ENCODE measurements at regions of chr12 and their contacts with region 1.

Region 1: GRCh38 chr12:96906849-96907670 is at the start of gene NEDD1:
- DNase-seq: peak; percentile 82
- H3K4me3 Mint-ChIP-seq: peak within 1 kb of the TSS; percentile 97
- H3K27ac Mint-ChIP-seq: peak within 1 kb of the TSS; percentile 95
- H3K4me1 Mint-ChIP-seq: peaks cover 41% of the 10 kb centered on the region
- H3K27me3 Mint-ChIP-seq: no peaks in the 10 kb centered on the region
- total RNA-seq, gene NEDD1: 61.8 to 63.8 TPM

Region 2: DNA sequence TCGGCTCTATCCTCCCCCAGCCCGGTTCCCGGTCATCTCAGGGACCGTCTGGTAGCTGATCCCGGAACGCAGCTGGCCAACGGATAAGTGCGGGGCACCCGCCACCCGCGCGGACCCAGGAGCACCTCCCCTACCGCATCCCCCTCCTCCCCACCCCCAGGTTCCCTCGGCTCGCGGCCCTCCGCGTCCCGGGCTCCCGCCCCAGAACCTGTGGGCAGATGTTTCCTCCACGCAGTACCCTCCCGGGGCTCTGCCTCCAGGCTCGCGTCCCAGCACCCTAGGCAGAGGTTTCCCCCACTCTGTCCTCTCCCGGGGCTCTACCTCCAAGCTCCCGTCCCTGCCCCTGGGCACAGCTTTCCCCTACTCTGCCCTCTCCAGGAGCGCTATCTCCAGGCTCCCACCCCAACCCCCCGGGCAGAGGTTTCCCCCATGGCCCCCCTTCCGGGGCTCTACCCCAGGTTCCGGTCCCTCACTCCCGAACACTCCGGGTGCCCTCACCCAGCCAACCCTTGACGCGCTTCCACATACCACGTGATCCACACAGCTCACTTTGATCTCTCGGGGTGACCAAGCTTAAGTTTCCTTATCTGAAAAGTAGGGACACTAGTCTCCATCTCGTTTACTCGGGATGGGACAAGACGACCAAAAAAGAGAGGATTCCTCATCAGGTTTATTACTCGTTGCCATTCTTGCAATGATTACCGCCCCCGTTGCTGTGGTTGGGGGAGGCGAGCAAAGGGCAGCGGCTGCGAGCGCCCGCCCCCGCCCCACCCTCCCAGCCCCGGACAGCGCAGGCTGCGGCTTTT is 964.3 kb before region 1 on chr12 and contains the start of gene CCDC38:
- CTCF ChIA-PET with region 1: no interaction called
- intact Hi-C with region 1: loop called (anchors 5 kb)
- DNase-seq: peak; percentile 91
- H3K4me3 Mint-ChIP-seq: peak within 1 kb of the TSS; percentile 86
- H3K27ac Mint-ChIP-seq: peak within 1 kb of the TSS; percentile 80
- H3K4me1 Mint-ChIP-seq: peaks cover 4% of the 10 kb centered on the region
- H3K27me3 Mint-ChIP-seq: no peaks in the 10 kb centered on the region
- total RNA-seq, gene CCDC38: 0.49 TPM in 1 of 2 experiments, not detected in the other

Region 3: GRCh38 chr12:96427269-96427729 is 479.8 kb before region 1 on chr12:
- CTCF ChIA-PET with region 1: no interaction called
- intact Hi-C with region 1: loop called (anchors 10 kb)
- DNase-seq: peak; percentile 81
- H3K4me3 Mint-ChIP-seq: no peak overlapping the region
- H3K27ac Mint-ChIP-seq: peak overlapping the region; percentile 74
- H3K4me1 Mint-ChIP-seq: peaks cover 42% of the 10 kb centered on the region
- H3K27me3 Mint-ChIP-seq: no peaks in the 10 kb centered on the region

Region 4: GRCh38 chr12:96578526-96579125 is 328.4 kb before region 1 on chr12:
- CTCF ChIA-PET with region 1: no interaction called
- intact Hi-C with region 1: loop called (anchors 2 kb)
- DNase-seq: no peak
- H3K4me3 Mint-ChIP-seq: no peak overlapping the region
- H3K27ac Mint-ChIP-seq: no peak overlapping the region
- H3K4me1 Mint-ChIP-seq: peaks cover 9% of the 10 kb centered on the region
- H3K27me3 Mint-ChIP-seq: peaks cover 5% of the 10 kb centered on the region

Region 5: DNA sequence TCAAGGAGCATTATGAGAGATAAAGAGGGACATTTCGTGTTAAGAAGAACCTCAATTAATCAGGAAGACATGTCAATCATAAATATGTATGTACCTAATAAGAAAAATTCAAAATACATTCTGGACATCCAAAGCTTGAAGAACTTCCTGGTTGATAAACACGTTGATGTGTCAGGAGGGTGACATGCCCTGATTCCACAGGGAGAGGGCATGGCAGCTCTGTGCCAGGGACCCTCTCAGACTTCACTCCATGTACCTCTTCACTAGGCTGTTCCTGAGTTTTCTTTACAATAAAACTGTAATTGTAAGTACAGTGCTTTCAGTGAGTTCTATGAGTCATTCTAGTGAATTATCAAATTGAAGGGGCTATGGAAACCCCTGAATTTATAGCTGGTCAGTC is 254.2 kb before region 1 on chr12:
- CTCF ChIA-PET with region 1: no interaction called
- intact Hi-C with region 1: no loop called
- DNase-seq: no peak
- H3K4me3 Mint-ChIP-seq: no peak overlapping the region
- H3K27ac Mint-ChIP-seq: no peak overlapping the region
- H3K4me1 Mint-ChIP-seq: no peaks in the 10 kb centered on the region
- H3K27me3 Mint-ChIP-seq: peaks cover 3% of the 10 kb centered on the region

Region 6: DNA sequence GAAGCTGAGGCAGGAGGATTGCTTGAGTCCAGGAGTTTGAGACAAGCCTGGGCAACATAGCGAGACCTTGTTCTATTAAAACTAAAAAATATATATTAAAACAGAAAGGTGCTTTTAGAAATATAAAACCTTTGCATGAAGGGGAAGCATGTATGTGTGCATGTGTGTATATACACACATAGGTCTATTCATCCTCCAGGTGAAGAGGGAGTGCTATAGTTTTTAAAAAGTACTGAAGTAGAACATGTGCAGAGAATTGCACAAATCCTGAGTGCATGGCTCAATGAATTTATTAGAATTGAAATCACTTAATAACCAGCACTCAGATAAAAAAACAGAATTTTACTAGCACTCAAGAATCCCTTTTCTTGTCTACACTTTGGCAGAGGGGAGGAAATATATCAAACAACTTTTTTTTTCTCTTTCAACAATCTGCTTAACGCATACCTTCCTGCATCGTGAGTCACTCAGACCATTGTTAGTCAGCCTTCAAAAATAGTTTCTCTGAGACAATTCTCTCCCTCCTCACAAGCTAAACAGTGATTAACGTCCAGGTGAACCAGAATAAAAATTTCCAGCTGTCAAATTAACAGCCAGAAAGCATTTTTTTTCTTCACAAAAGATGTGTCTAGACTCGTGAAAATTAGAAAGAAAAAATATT is 17.7 kb before region 1 on chr12:
- CTCF ChIA-PET with region 1: no interaction called
- intact Hi-C with region 1: loop called (anchors 1 kb)
- DNase-seq: no peak
- H3K4me3 Mint-ChIP-seq: no peak overlapping the region
- H3K27ac Mint-ChIP-seq: peak overlapping the region; percentile 25
- H3K4me1 Mint-ChIP-seq: peaks cover 8% of the 10 kb centered on the region
- H3K27me3 Mint-ChIP-seq: peaks cover 5% of the 10 kb centered on the region

Region 7: DNA sequence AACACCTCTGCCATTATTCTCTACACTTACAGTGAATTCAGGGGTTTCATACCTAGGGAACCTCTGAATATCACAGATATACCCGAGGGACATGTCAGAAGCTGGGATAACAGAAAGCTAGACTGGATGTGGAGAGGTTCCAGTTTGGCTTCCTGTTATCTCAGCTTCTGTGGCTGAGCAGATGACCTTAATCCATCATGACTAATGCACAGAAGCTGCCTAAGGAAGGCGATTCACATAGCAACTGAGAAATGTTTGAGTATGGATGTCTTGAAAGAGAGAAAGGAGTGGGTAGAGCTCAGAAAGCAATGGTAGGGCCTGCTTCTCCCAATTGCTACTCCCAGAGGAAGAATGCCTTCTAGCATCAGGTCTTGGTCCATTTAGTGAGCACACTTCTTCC is 743.2 kb after region 1 on chr12:
- CTCF ChIA-PET with region 1: no interaction called
- intact Hi-C with region 1: no loop called
- DNase-seq: no peak
- H3K4me3 Mint-ChIP-seq: no peak overlapping the region
- H3K27ac Mint-ChIP-seq: no peak overlapping the region
- H3K4me1 Mint-ChIP-seq: no peaks in the 10 kb centered on the region
- H3K27me3 Mint-ChIP-seq: no peaks in the 10 kb centered on the region

Region 8: GRCh38 chr12:98503592-98504367 is 1596.7 kb after region 1 on chr12:
- CTCF ChIA-PET with region 1: no interaction called
- intact Hi-C with region 1: loop called (anchors 5 kb)
- DNase-seq: peak; percentile 97
- H3K4me3 Mint-ChIP-seq: peak overlapping the region; percentile 97
- H3K27ac Mint-ChIP-seq: peak overlapping the region; percentile 100
- H3K4me1 Mint-ChIP-seq: peaks cover 16% of the 10 kb centered on the region
- H3K27me3 Mint-ChIP-seq: peaks cover 8% of the 10 kb centered on the region

Measured in activated naive CD4-positive, alpha-beta T cell treated with anti-CD3 and anti-CD28 coated beads for 36 hours (primary cell).